B cell (primary cell): ENCODE measurements at regions of chr1 and their contacts with region 1.

Region 1: DNA sequence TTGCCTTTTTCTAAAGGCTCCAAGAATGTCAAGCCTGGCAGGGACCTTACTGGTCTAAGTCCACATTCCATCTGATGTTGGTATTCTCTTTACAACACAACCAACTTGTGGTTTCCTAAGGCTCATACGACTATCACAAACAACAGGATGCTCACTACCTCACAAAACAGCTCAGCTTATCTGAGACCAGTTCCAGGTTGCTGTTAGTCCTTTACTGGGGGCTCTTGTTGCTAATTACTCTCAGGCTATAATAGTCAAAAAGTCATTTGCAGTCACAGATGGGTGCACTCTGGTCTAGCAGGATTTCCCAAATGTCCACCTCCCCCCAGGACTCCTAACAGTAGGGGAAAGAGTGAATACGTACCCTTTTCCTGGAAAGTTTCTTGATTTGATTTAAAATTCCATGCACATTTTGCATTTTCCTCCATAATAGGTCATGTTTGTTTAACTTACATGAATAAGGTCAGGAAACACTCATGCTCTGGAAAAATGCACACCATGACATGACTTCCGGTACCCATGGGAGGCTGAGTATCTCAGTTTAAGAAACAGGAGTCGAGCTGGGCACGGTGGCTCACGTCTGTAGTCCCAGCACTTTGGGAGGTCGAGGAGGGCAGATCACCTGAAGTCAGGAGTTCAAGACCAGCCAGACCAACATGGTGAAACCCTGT is 16.0 kb downstream of the LCK start:
- DNase-seq: no peak
- ATAC-seq: no peak
- H3K4me3 ChIP-seq: no peak overlapping the region
- H3K4me3 Mint-ChIP-seq: no peak overlapping the region
- H3K27ac ChIP-seq: no peak overlapping the region
- H3K27ac Mint-ChIP-seq: peak overlapping the region; percentile 74
- H3K4me1 ChIP-seq: peaks cover 22 to 28% of the 10 kb centered on the region in 2 donors
- H3K4me1 Mint-ChIP-seq: peaks cover 27% of the 10 kb centered on the region
- H3K27me3 ChIP-seq: no peaks in the 10 kb centered on the region
- H3K27me3 Mint-ChIP-seq: no peaks in the 10 kb centered on the region
- CTCF ChIP-seq: no peak

Region 2: DNA sequence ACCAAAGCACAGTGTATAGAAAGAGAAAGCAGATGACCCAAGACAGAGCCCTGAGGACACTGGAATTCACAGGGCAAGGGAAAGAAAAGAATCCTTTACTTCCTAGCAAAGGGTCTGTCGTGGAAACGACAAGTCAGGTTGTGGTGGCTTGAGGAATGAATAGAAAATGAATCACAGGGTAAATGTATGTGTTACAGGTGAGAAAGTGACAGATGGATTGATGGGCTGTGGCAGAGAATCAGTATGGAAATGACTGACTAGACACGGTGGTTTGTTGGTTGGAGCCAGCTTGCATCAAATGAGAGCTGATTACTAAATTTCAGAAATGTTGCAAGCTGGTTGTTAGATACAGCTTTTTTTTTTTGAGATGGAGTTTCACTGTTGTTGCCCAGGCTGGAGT is 375.8 kb before region 1 on chr1:
- CTCF ChIA-PET with region 1: no interaction called
- POLR2A ChIA-PET with region 1: no interaction called
- intact Hi-C with region 1: no loop called
- DNase-seq: no peak
- ATAC-seq: no peak
- H3K4me3 ChIP-seq: no peak overlapping the region
- H3K4me3 Mint-ChIP-seq: no peak overlapping the region
- H3K27ac ChIP-seq: no peak overlapping the region
- H3K27ac Mint-ChIP-seq: peak overlapping the region; percentile 71
- H3K4me1 ChIP-seq: peaks cover 17 to 18% of the 10 kb centered on the region in 2 donors
- H3K4me1 Mint-ChIP-seq: peaks cover 28% of the 10 kb centered on the region
- H3K27me3 ChIP-seq: no peaks in the 10 kb centered on the region
- H3K27me3 Mint-ChIP-seq: no peaks in the 10 kb centered on the region
- CTCF ChIP-seq: no peak

Region 3: DNA sequence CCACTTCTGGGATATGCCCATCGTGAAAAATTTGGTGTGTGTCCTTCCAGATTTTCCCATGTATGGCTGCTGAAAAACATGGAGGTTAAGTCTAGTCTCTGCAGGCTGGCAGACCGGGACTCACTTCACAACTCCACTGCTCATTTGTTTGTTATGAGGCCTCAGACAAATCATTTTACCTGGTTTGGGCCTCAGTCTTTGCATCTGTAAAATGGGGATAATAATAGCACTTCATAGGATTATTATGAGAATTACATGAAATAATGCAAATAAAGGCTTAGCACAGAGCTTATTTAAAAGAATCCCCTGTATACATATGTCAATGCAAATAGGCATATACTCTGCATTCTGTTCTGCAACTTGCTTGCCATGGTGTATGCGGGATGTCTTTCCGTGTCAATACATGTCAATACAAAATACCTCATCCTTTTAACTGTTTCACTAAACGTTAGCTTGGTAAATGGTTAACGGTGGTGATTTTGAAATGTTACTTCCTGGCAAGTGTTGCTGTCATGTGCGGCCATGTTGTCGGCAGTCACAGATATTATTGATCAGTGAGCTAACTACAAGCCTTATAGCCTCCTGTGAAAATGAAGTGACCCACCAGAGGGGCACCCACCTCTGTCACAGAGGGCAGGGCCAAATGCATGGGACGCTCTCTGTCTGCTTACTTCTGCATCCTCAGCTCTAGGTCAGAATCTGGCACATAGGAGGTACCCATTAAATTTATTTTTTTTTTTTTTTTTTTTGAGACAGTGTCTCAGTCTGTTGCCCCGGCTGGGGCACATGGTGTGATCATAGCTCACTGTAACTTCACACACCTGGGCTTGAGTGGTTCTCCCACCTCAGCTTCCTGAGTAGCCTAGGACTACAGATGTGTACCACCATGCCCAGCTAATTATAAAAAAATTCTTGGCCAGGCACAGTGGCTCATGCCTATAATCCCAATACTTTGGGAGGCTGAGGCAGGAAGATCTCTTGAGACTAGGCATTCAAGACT is 11.7 kb before region 1 on chr1:
- CTCF ChIA-PET with region 1: interaction called, 44 read pairs
- POLR2A ChIA-PET with region 1: interaction called, 5 read pairs
- intact Hi-C with region 1: loop called (anchors 1 kb)
- DNase-seq: no peak
- ATAC-seq: no peak
- H3K4me3 ChIP-seq: no peak overlapping the region
- H3K4me3 Mint-ChIP-seq: peak overlapping the region; percentile 68
- H3K27ac ChIP-seq: peak overlapping the region in 1 of 2 donors; percentile 50
- H3K27ac Mint-ChIP-seq: peak overlapping the region; percentile 88
- H3K4me1 ChIP-seq: peaks cover 61 to 70% of the 10 kb centered on the region in 2 donors
- H3K4me1 Mint-ChIP-seq: peaks cover 60% of the 10 kb centered on the region
- H3K27me3 ChIP-seq: no peaks in the 10 kb centered on the region
- H3K27me3 Mint-ChIP-seq: no peaks in the 10 kb centered on the region
- CTCF ChIP-seq: no peak